ENCODE measurements at regions of chr15 and their contacts with region 1.

Region 1: DNA sequence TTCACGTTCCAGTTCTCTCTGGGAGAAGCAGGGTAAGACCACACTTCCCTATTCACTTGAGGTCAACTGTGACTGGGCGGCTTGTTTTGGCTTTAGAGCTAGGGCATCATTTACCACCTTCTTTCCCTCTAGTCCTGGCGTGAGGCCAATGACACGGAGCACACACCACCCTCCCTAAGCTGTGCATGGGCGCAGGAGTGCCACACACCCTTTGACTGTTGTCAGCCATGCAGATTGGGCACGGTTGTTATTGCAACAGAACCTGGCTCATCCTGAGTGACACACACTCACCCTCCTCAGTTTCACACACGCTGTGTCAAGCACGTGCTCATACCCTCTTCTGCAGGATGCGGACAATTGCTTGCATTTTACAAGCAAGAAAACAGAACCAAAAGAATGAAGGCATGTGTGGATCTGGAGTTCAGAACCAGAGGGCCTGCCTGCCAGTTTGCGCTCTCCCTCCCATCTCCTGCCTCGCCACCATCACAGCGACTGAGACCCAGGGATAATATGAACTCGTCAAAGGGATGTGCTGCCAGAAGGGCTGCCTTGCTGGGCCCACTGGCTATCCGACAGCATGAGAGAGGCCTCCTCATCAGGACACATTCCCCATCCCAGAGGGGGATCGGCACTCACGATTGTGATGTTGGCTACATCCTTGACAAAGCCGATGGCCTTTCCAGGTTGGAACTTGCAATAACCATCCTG is 17.6 kb downstream of the CTSH start:
- DNase-seq: no peak
- H3K4me3 ChIP-seq: no peak overlapping the region
- H3K27ac ChIP-seq: peak overlapping the region in 1 of 2 donors; percentile 13
- H3K4me1 ChIP-seq: peaks cover 9 to 10% of the 10 kb centered on the region in 2 donors
- H3K27me3 ChIP-seq: no peaks in the 10 kb centered on the region
- CTCF ChIP-seq: no peak
- POLR2A ChIP-seq: no peak

Region 2: DNA sequence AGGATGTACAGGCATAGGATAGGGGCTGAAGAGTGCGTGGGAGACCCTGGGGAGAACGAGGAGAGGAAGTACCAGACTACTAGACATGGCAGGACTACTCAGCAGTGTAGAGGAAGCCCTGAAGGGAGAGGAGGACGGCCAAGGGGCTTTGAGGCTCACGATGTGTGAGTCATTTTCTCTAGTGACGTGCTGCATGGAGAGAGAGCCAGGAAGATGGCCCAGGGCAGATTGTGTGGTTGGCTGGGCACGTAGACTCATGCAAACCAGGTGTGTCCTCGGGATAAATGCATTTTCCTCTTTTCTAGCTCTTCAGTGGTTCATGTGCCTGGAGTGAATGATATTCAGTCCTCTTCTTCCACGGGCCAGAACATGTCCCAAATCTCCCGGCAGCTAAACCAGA is 1652.9 kb after region 1 on chr15:
- intact Hi-C with region 1: loop called (anchors 10 kb)
- DNase-seq: peak; percentile 50 to 67
- H3K4me3 ChIP-seq: no peak overlapping the region
- H3K27ac ChIP-seq: peak overlapping the region; percentile 53 to 71
- H3K4me1 ChIP-seq: no peaks in the 10 kb centered on the region
- H3K27me3 ChIP-seq: no peaks in the 10 kb centered on the region
- CTCF ChIP-seq: no peak
- POLR2A ChIP-seq: no peak